ENCODE measurements at regions of chr15 and their contacts with region 1.

Region 1: DNA sequence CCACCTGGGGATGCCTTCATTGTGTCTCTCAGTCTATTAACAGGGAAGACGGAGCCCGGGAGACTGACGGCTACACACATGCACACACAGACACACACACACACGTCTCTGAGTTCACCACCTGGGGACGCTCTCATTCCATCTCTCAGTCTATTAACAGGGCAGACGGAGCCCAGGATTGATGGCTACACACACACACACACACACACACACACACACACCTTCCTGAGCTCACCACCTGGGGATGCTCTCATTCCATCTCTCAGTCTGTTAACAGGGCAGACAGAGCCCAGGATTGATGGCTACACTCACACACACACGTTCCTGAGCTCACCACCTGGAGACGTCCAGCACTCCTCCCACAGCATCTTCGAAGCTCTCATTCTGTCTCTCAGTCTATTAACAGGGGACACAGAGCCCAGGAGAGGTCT is 143.9 kb downstream of the OR4M2 start:
- DNase-seq: peak in 1 of 9 experiments; percentile 32
- ATAC-seq: no peak
- H3K4me3 ChIP-seq: no peak overlapping the region
- H3K4me3 Mint-ChIP-seq: no peak overlapping the region
- H3K27ac ChIP-seq: no peak overlapping the region
- H3K27ac Mint-ChIP-seq: no peak overlapping the region
- H3K4me1 ChIP-seq: peaks cover 26% of the 10 kb centered on the region
- H3K4me1 Mint-ChIP-seq: peaks cover 28% of the 10 kb centered on the region
- H3K27me3 ChIP-seq: no peaks in the 10 kb centered on the region
- H3K27me3 Mint-ChIP-seq: peaks cover 2% of the 10 kb centered on the region
- CTCF ChIP-seq: no peak

Region 2: GRCh38 chr15:20356444-20356910 is 1867.8 kb before region 1 on chr15:
- CTCF ChIA-PET with region 1: interaction called, 122 read pairs
- POLR2A ChIA-PET with region 1: interaction called, 3 read pairs
- intact Hi-C with region 1: loop called in 1 of 2 experiments (anchors 1 kb)
- DNase-seq: peak; percentile 66 to 93 (median 84)
- ATAC-seq: peak; percentile 67
- H3K4me3 ChIP-seq: no peak overlapping the region
- H3K4me3 Mint-ChIP-seq: peak overlapping the region; percentile 37
- H3K27ac ChIP-seq: no peak overlapping the region
- H3K27ac Mint-ChIP-seq: no peak overlapping the region
- H3K4me1 ChIP-seq: peaks cover 20% of the 10 kb centered on the region
- H3K4me1 Mint-ChIP-seq: peaks cover 3% of the 10 kb centered on the region
- H3K27me3 ChIP-seq: peaks cover 0 to 3% of the 10 kb centered on the region in 2 experiments
- H3K27me3 Mint-ChIP-seq: peaks cover 2% of the 10 kb centered on the region
- CTCF ChIP-seq: peak; percentile 92

Region 3: DNA sequence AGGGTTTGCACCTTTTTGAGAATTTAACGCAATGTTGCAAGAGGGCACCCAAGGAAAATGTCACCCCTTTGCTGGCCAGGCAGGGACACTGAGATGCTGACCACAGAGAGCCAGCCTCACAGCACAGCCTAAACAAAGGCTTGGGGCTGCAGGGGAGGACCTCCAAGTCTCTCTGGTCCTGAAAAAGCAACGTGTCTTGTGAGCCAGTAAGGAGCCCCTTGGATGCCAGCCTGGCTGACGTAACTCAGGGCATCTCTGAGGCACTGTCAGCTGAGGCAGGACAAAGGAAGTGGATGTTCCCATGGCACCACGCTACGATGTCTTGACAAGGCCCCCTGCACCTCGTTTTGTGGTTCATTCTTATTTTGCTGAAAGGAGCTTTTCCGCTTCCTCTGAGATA is 16.7 kb after region 1 on chr15:
- CTCF ChIA-PET with region 1: interaction called, 3 read pairs
- POLR2A ChIA-PET with region 1: no interaction called
- intact Hi-C with region 1: loop called in 1 of 2 experiments (anchors 1 kb)
- DNase-seq: no peak
- ATAC-seq: no peak
- H3K4me3 ChIP-seq: no peak overlapping the region
- H3K4me3 Mint-ChIP-seq: no peak overlapping the region
- H3K27ac ChIP-seq: no peak overlapping the region
- H3K27ac Mint-ChIP-seq: no peak overlapping the region
- H3K4me1 ChIP-seq: no peaks in the 10 kb centered on the region
- H3K4me1 Mint-ChIP-seq: no peaks in the 10 kb centered on the region
- H3K27me3 ChIP-seq: no peaks in the 10 kb centered on the region
- H3K27me3 Mint-ChIP-seq: peaks cover 4% of the 10 kb centered on the region
- CTCF ChIP-seq: no peak

Region 4: DNA sequence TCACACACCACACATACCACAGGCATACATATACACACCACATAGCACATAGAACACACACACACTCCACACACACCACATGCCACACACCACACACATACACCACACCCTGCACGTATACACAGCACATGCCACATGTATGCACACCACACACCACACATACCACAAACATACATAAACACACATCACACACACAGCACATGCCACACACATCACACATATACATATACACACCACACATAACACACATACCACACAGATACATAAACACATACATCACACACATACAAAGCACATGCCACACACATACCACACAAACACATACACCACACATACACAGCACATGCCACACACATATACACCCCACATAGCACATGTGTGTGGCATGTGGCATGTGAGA is 27.2 kb after region 1 on chr15:
- CTCF ChIA-PET with region 1: no interaction called
- POLR2A ChIA-PET with region 1: no interaction called
- intact Hi-C with region 1: no loop called
- DNase-seq: no peak
- ATAC-seq: no peak
- H3K4me3 ChIP-seq: no peak overlapping the region
- H3K4me3 Mint-ChIP-seq: no peak overlapping the region
- H3K27ac ChIP-seq: no peak overlapping the region
- H3K27ac Mint-ChIP-seq: no peak overlapping the region
- H3K4me1 ChIP-seq: peaks cover 13% of the 10 kb centered on the region
- H3K4me1 Mint-ChIP-seq: peaks cover 17% of the 10 kb centered on the region
- H3K27me3 ChIP-seq: peaks cover 0 to 6% of the 10 kb centered on the region in 2 experiments
- H3K27me3 Mint-ChIP-seq: peaks cover 26% of the 10 kb centered on the region
- CTCF ChIP-seq: no peak

Region 5: GRCh38 chr15:22887157-22887951 is 663.1 kb after region 1 on chr15:
- CTCF ChIA-PET with region 1: no interaction called
- POLR2A ChIA-PET with region 1: no interaction called
- intact Hi-C with region 1: no loop called
- DNase-seq: no peak
- ATAC-seq: no peak
- H3K4me3 ChIP-seq: no peak overlapping the region
- H3K4me3 Mint-ChIP-seq: no peak overlapping the region
- H3K27ac ChIP-seq: no peak overlapping the region
- H3K27ac Mint-ChIP-seq: no peak overlapping the region
- H3K4me1 ChIP-seq: no peaks in the 10 kb centered on the region
- H3K4me1 Mint-ChIP-seq: no peaks in the 10 kb centered on the region
- H3K27me3 ChIP-seq: no peaks in the 10 kb centered on the region
- H3K27me3 Mint-ChIP-seq: no peaks in the 10 kb centered on the region
- CTCF ChIP-seq: no peak